CD4-positive, alpha-beta memory T cell (primary cell): ENCODE measurements at regions of chr5 and their contacts with region 1.

Region 1: GRCh38 chr5:171342362-171343111 is 33.5 kb downstream of the TLX3 start:
- DNase-seq: peak in 3 of 5 donors; percentile 14 to 19 (median 16)
- H3K4me3 ChIP-seq: no peak overlapping the region
- H3K4me3 Mint-ChIP-seq: no peak overlapping the region
- H3K27ac ChIP-seq: no peak overlapping the region
- H3K27ac Mint-ChIP-seq: no peak overlapping the region
- H3K4me1 ChIP-seq: no peaks in the 10 kb centered on the region
- H3K4me1 Mint-ChIP-seq: peaks cover 0 to under 1% (median 0%) of the 10 kb centered on the region in 4 donors
- H3K27me3 ChIP-seq: peaks cover 3% of the 10 kb centered on the region
- H3K27me3 Mint-ChIP-seq: peaks cover 2 to 15% of the 10 kb centered on the region in 2 donors

Region 2: DNA sequence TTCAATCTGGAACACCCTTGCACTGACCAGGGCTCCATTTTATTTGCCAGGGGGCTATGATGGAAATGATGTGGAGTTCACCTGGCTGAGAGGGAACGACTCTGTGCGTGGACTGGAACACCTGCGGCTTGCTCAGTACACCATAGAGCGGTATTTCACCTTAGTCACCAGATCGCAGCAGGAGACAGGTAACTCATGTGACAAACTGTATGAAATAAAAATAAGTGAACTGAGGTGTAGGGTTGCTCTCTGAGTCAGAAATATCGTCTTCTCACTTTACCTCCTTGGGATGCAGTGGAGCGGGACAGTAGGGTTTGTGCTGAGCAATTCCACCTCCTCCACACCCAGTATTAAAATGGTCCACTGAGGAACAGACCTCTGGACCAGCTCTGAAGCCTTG is 536.9 kb before region 1 on chr5:
- CTCF ChIA-PET with region 1: no interaction called
- POLR2A ChIA-PET with region 1: no interaction called
- intact Hi-C with region 1: no loop called
- DNase-seq: no peak
- H3K4me3 ChIP-seq: no peak overlapping the region
- H3K4me3 Mint-ChIP-seq: no peak overlapping the region
- H3K27ac ChIP-seq: no peak overlapping the region
- H3K27ac Mint-ChIP-seq: no peak overlapping the region
- H3K4me1 ChIP-seq: no peaks in the 10 kb centered on the region
- H3K4me1 Mint-ChIP-seq: no peaks in the 10 kb centered on the region
- H3K27me3 ChIP-seq: no peaks in the 10 kb centered on the region
- H3K27me3 Mint-ChIP-seq: peaks cover 6 to 7% of the 10 kb centered on the region in 2 donors

Region 3: GRCh38 chr5:170986598-170986997 is 355.9 kb before region 1 on chr5:
- CTCF ChIA-PET with region 1: interaction called, 3 read pairs
- POLR2A ChIA-PET with region 1: no interaction called
- intact Hi-C with region 1: loop called (anchors 5 kb)
- DNase-seq: no peak
- H3K4me3 ChIP-seq: no peak overlapping the region
- H3K4me3 Mint-ChIP-seq: no peak overlapping the region
- H3K27ac ChIP-seq: no peak overlapping the region
- H3K27ac Mint-ChIP-seq: no peak overlapping the region
- H3K4me1 ChIP-seq: no peaks in the 10 kb centered on the region
- H3K4me1 Mint-ChIP-seq: no peaks in the 10 kb centered on the region
- H3K27me3 ChIP-seq: no peaks in the 10 kb centered on the region
- H3K27me3 Mint-ChIP-seq: peaks cover 0 to 1% of the 10 kb centered on the region in 2 donors

Region 4: GRCh38 chr5:172245703-172246125 is 903.2 kb after region 1 on chr5:
- CTCF ChIA-PET with region 1: no interaction called
- POLR2A ChIA-PET with region 1: no interaction called
- intact Hi-C with region 1: no loop called
- DNase-seq: no peak
- H3K4me3 ChIP-seq: no peak overlapping the region
- H3K4me3 Mint-ChIP-seq: no peak overlapping the region
- H3K27ac ChIP-seq: no peak overlapping the region
- H3K27ac Mint-ChIP-seq: peak overlapping the region in 1 of 7 donors; percentile 25
- H3K4me1 ChIP-seq: no peaks in the 10 kb centered on the region
- H3K4me1 Mint-ChIP-seq: peaks cover 0 to 7% (median 5%) of the 10 kb centered on the region in 4 donors
- H3K27me3 ChIP-seq: no peaks in the 10 kb centered on the region
- H3K27me3 Mint-ChIP-seq: no peaks in the 10 kb centered on the region